Activated naive CD4-positive, alpha-beta T cell treated with anti-CD3 and anti-CD28 coated beads, Interleukin-2, amount 10 ng/mL, durations not matched to agents 7 days and 5 days (primary cell): ENCODE measurements at regions of chr20 and their contacts with region 1.

Region 1: DNA sequence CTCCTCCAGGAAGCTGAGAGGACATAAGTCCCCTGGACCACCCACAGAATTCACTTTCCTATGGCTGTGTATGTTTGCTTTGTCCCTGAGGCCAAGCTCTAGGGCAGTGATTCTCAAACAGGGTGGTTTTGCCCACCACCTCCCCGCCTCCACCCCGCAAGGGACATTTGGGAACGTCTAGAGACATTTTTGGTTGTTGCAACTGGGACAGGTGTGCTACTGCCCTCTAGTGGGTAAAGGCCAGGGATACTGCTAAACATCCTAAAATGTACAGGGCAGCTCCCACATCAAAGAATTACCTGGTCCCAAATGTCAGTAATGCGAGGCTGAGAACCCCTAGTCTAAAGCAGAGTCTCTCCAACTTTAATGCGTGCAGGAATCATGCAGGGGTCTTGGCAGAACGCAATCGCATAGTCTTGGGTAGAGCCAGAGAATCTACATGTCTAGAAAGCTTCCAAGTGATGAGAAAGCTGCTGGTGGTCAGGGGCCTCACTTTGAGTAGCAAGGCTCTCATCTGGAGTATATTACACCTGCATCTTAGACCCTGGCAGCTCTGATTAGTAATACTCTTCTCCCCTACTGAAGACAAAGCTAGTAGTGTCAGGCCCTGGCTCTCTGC is 5.1 kb downstream of the KCNS1 start:
- DNase-seq: peak; percentile 74
- H3K4me3 Mint-ChIP-seq: no peak overlapping the region
- H3K27ac Mint-ChIP-seq: peak overlapping the region; percentile 17
- H3K4me1 Mint-ChIP-seq: peaks cover 11% of the 10 kb centered on the region
- H3K27me3 Mint-ChIP-seq: peaks cover 52% of the 10 kb centered on the region

Region 2: GRCh38 chr20:44765652-44766347 is 330.1 kb before region 1 on chr20:
- CTCF ChIA-PET with region 1: no interaction called
- DNase-seq: no peak
- H3K4me3 Mint-ChIP-seq: no peak overlapping the region
- H3K27ac Mint-ChIP-seq: no peak overlapping the region
- H3K4me1 Mint-ChIP-seq: no peaks in the 10 kb centered on the region
- H3K27me3 Mint-ChIP-seq: peaks cover 22% of the 10 kb centered on the region

Region 3: DNA sequence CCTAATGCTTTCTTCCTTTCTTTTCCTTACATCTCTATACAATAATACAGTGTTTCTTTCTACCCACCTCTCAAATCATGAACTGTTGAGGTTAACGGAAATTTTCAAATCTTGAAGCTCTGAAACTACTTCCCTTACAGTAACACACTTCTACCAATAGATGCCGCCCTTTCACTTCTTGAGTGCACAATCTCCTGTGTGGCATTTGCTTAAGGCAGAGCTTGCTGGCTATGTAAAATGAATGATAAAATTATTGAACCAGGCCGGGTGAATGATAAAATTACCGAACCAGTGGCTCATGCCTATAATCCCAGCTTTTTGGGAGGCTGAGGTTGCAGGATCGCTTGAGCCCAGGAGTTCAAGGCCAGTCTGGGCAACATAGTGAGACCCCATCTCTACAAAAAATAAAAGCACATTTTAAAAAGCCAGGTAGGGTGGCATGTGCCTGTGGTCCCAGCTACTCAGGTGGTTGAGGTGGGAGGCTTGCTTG is 51.7 kb before region 1 on chr20:
- CTCF ChIA-PET with region 1: interaction called, 128 read pairs
- DNase-seq: peak; percentile 43
- H3K4me3 Mint-ChIP-seq: no peak overlapping the region
- H3K27ac Mint-ChIP-seq: peak overlapping the region; percentile 67
- H3K4me1 Mint-ChIP-seq: peaks cover 47% of the 10 kb centered on the region
- H3K27me3 Mint-ChIP-seq: no peaks in the 10 kb centered on the region

Region 4: GRCh38 chr20:45070932-45071632 is 24.8 kb before region 1 on chr20:
- CTCF ChIA-PET with region 1: interaction called, 16 read pairs
- DNase-seq: no peak
- H3K4me3 Mint-ChIP-seq: no peak overlapping the region
- H3K27ac Mint-ChIP-seq: no peak overlapping the region
- H3K4me1 Mint-ChIP-seq: no peaks in the 10 kb centered on the region
- H3K27me3 Mint-ChIP-seq: no peaks in the 10 kb centered on the region

Region 5: GRCh38 chr20:45111799-45112471 is 16.1 kb after region 1 on chr20:
- CTCF ChIA-PET with region 1: interaction called, 104 read pairs
- DNase-seq: no peak
- H3K4me3 Mint-ChIP-seq: no peak overlapping the region
- H3K27ac Mint-ChIP-seq: no peak overlapping the region
- H3K4me1 Mint-ChIP-seq: no peaks in the 10 kb centered on the region
- H3K27me3 Mint-ChIP-seq: peaks cover 60% of the 10 kb centered on the region

Region 6: GRCh38 chr20:45444050-45444449 is 348.2 kb after region 1 on chr20:
- CTCF ChIA-PET with region 1: no interaction called
- DNase-seq: peak; percentile 70
- H3K4me3 Mint-ChIP-seq: no peak overlapping the region
- H3K27ac Mint-ChIP-seq: no peak overlapping the region
- H3K4me1 Mint-ChIP-seq: peaks cover 30% of the 10 kb centered on the region
- H3K27me3 Mint-ChIP-seq: peaks cover 46% of the 10 kb centered on the region